Activated naive CD4-positive, alpha-beta T cell treated with anti-CD3 and anti-CD28 coated beads for 36 hours (primary cell): ENCODE measurements at regions of chrX and their contacts with region 1.

Region 1: DNA sequence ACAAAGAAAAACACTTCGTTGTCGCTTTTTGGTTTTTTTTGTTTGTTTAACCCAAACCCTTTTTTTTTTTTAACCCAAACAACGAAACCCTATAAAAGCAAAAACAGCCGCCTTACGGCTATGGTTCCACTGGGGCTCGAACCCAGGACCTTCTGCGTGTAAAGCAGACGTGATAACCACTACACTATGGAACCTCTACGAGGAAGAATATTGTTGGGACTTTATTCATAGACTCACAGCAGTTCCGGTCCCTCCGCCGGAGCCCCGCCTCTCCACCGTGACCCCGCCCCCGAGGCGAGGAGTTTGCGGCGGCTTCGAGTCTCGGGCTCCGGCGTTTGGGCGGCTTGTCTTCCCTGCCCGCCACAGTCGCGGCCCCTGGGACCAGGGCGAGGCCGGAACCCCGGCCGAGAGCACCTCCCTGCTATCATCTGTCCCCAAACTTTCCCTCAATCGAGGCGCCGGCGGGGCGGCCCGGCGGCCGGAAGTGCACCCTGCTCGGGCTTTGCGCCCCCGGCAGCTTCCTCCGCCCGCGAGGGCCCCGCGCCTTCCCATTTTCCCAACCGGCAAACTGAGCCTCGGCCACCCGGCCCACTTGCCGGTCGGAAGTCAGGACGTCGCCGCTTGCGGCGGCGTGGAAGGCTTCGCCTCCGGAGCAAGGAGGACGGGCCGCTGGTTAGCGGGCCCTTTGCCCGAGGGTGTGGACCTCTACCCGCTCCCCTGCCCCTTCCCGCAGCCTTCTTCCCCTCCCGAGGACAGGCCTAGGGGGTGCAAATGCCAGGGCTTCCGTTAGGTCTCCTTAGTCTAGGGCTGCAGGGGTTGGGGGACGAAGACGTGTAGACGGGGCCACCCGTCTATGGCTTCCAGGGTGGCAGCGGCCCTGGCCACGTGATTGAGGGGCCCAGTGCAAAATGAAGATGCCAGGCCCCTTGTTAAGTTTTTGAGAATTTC is 3.2 kb upstream of the RS1 start:
- DNase-seq: peak; percentile 72
- H3K4me3 Mint-ChIP-seq: peak overlapping the region; percentile 67
- H3K27ac Mint-ChIP-seq: peak overlapping the region; percentile 75
- H3K4me1 Mint-ChIP-seq: peaks cover 8% of the 10 kb centered on the region
- H3K27me3 Mint-ChIP-seq: no peaks in the 10 kb centered on the region

Region 2: DNA sequence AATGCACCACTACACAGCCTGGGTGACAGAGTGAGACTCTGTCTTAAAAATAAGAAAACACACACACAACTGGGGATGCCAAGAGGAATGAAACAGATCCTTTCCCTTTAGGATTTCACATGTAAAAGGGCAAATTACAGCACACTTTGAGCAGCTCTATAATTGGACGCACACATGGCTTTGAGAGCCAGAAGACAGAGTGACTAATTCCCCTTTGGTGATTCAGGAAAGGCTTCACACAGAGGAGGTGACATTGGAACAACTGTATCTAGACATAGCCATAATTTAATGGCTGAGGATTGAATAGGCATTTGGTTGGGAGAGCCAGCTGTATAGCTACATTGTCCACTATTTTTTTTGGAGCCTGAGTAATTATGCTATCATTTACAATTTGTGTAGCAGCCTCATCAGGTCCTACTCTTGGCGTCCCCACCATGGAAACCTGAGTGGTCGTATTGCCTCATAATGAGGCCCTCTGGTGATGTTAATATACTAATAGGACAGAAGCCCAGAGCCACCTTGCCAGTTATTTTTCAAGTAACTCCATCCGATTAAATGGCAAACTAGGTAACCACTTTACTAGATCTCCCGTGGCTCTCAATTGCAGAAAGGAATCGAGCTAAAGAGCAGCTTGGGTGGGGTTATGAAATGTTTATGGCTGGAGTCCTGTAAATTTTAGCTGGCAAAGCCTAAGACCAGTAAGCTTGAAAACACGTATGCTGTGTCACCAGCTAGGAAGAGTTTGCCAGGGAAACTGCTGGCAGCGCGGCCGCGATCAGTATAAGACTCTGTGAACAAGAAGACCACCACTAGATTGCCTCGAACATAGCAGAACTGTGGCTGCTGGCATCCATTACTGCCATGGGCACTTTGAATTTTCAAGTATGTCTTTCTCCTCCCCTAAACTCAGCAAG is 23.9 kb after region 1 on chrX:
- CTCF ChIA-PET with region 1: no interaction called
- intact Hi-C with region 1: no loop called
- DNase-seq: no peak
- H3K4me3 Mint-ChIP-seq: no peak overlapping the region
- H3K27ac Mint-ChIP-seq: no peak overlapping the region
- H3K4me1 Mint-ChIP-seq: no peaks in the 10 kb centered on the region
- H3K27me3 Mint-ChIP-seq: no peaks in the 10 kb centered on the region

Region 3: GRCh38 chrX:18938710-18939109 is 263.6 kb after region 1 on chrX:
- CTCF ChIA-PET with region 1: no interaction called
- intact Hi-C with region 1: no loop called
- DNase-seq: no peak
- H3K4me3 Mint-ChIP-seq: no peak overlapping the region
- H3K27ac Mint-ChIP-seq: no peak overlapping the region
- H3K4me1 Mint-ChIP-seq: no peaks in the 10 kb centered on the region
- H3K27me3 Mint-ChIP-seq: no peaks in the 10 kb centered on the region

Region 4: GRCh38 chrX:18984381-18985185 is 309.5 kb after region 1 on chrX:
- CTCF ChIA-PET with region 1: no interaction called
- intact Hi-C with region 1: loop called (anchors 1 kb)
- DNase-seq: peak; percentile 85
- H3K4me3 Mint-ChIP-seq: peak overlapping the region; percentile 88
- H3K27ac Mint-ChIP-seq: peak overlapping the region; percentile 88
- H3K4me1 Mint-ChIP-seq: peaks cover 11% of the 10 kb centered on the region
- H3K27me3 Mint-ChIP-seq: no peaks in the 10 kb centered on the region

Region 5: DNA sequence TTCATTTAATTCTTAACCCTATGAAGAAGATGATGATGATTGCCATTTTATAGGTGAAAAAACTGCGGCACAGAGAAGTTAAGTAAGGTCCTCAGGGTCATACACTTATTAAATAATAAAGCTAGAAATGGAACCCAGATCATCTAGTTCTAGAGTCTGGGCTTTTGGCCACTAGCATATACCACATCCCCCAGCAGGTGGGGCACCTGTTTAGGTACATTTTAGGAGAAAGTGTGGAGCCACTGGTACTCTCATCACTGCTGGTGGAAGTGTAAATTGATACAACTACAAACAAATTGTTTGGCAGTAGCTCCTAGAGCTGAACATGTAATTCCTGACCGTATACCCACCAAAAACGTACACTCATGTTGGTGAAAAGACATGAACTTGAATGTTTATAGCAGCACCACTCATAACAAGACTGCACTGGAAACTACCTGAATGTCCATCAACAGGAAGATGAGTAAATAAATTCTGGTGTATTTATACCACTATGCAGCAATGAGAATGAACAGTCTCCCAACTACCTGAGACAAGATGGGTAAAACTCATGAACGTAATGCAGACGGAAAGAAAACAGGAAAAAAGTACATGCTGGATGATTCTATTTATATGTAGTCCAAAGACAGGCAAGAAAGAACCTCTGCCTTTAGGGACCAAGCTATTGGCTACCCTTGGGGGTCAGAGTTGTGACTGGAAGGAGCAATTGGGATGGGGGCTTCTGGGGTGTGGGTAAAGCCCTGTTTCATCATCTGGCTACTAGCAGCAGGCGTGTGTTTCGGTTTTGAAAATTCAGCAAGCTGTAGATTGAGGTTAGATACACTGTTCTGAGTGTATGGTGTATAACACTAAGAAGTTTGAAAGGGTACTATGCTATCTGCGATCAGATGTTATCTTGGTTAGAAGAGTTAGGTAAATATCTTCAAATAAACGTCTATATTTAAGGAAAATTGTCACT is 519.5 kb after region 1 on chrX:
- CTCF ChIA-PET with region 1: no interaction called
- intact Hi-C with region 1: no loop called
- DNase-seq: no peak
- H3K4me3 Mint-ChIP-seq: no peak overlapping the region
- H3K27ac Mint-ChIP-seq: no peak overlapping the region
- H3K4me1 Mint-ChIP-seq: no peaks in the 10 kb centered on the region
- H3K27me3 Mint-ChIP-seq: no peaks in the 10 kb centered on the region

Region 6: GRCh38 chrX:19343535-19344408 is 668.7 kb after region 1 on chrX and contains the start of gene PDHA1:
- CTCF ChIA-PET with region 1: no interaction called
- intact Hi-C with region 1: loop called (anchors 1 kb)
- DNase-seq: peak; percentile 94
- H3K4me3 Mint-ChIP-seq: peak within 1 kb of the TSS; percentile 83
- H3K27ac Mint-ChIP-seq: peak within 1 kb of the TSS; percentile 78
- H3K4me1 Mint-ChIP-seq: peaks cover 21% of the 10 kb centered on the region
- H3K27me3 Mint-ChIP-seq: no peaks in the 10 kb centered on the region
- total RNA-seq, gene PDHA1: 233 to 242 TPM